ENCODE measurements at regions of chr9 and their contacts with region 1.

Region 1: DNA sequence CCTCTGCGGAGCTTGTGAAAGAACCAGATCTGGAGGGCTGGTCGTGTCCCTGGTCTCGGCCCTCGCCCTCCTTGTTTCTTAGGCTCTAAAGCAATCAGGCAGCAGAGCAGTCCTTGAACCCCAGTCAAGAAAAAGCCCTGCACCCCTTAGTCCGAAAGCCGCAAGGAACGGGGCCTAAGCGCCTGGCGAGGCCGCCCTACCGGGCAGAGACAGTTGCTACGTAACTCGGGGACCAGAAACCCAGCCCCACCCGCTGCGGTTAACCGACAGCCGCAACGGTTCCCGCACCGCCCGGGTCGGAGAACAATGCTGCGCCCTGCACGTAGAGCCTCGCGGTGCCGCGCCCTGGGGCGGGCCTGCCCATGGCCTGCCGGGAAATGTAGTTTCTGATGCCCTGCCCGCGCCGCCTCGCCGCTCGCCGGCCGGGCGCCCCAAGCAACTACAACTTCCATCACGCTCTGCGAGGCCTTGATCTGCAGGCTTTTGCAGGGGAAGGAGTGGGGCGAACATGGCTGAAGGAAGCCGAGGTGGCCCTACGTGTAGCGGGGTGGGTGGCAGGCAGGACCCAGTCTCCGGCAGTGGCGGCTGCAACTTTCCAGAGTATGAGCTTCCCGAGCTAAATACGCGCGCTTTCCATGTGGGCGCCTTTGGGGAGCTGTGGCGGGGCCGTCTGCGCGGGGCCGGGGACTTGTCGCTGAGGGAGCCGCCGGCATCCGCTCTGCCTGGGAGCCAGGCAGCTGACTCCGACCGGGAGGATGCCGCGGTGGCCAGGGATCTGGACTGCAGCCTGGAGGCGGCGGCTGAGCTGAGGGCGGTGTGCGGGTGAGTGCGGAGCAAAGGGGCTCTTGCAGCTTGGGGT is at the start of gene SNAPC3:
- DNase-seq: peak; percentile 94 to 97 (median 96)
- ATAC-seq: peak; percentile 99 to 100 (median 100)
- H3K4me3 ChIP-seq: peak within 1 kb of the TSS; percentile 78 to 99 (median 88)
- H3K27ac ChIP-seq: peak within 1 kb of the TSS; percentile 81 to 98 (median 92)
- H3K4me1 ChIP-seq: peaks cover 0 to 48% (median 34%) of the 10 kb centered on the region in 12 donors
- H3K27me3 ChIP-seq: no peaks in the 10 kb centered on the region
- CTCF ChIP-seq: peak in 3 of 12 donors; percentile 9 to 21 (median 14)
- POLR2A ChIP-seq: peak in 1 of 2 donors; percentile 84
- total RNA-seq, gene SNAPC3: 22.3 to 41.1 (median 30.6) TPM

Region 2: GRCh38 chr9:15211160-15211814 is 211.3 kb before region 1 on chr9:
- intact Hi-C with region 1: loop called in 8 of 10 experiments (anchors 5 to 10 kb)
- DNase-seq: peak in 3 of 5 donors; percentile 34 to 60 (median 53)
- ATAC-seq: peak; percentile 61 to 72 (median 67)
- H3K4me3 ChIP-seq: peak overlapping the region in 1 of 12 donors; percentile 6
- H3K27ac ChIP-seq: peak overlapping the region in 3 of 12 donors; percentile 14 to 66 (median 32)
- H3K4me1 ChIP-seq: peaks cover 0 to 12% (median 7%) of the 10 kb centered on the region in 12 donors
- H3K27me3 ChIP-seq: no peaks in the 10 kb centered on the region
- CTCF ChIP-seq: peak; percentile 82 to 97 (median 92)
- POLR2A ChIP-seq: no peak

Region 3: DNA sequence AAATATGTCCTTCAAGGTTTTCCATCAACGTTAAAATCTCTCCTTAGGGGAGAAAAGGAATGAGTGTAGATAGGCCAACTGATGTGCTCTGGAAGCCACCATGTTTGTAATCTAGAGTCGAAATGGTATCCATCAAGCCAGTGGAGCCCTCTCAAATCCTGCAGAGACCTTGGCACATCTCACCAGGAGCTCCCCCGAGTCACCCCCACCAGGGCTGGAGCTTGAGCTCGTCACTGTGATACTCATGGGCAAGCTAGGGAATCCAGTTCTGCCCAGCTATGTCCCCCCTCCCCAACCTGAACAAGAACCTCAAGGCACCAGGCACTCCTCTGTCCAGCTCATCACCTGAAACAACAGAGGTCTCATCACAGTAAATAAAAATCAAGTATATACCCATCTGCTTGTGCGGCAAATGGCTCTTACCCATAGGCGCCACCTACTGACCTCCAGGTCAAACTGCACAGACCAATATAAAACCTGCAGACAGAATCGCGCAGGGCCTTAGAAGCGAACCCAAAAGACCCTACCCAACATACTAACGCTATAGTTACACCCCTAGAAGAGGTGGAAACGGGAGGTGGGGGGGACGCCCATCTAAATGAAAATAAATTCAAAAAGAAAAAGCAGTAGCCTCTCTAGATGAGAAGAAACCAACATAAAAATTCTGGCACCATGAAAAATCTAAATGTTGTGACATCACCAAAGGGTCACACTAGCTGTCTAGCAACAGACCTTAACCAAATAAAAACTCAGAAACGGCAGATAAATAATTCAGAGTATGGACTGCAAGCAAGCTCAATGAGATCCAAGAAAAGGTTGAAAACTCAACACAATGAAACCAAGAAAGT is 190.6 kb before region 1 on chr9:
- intact Hi-C with region 1: no loop called
- DNase-seq: no peak
- ATAC-seq: peak in 1 of 4 donors; percentile 44
- H3K4me3 ChIP-seq: no peak overlapping the region
- H3K27ac ChIP-seq: no peak overlapping the region
- H3K4me1 ChIP-seq: no peaks in the 10 kb centered on the region
- H3K27me3 ChIP-seq: no peaks in the 10 kb centered on the region
- CTCF ChIP-seq: peak in 10 of 12 donors; percentile 11 to 58 (median 36)
- POLR2A ChIP-seq: no peak

Region 4: GRCh38 chr9:15295761-15296405 is 126.7 kb before region 1 on chr9:
- intact Hi-C with region 1: loop called in 3 of 10 experiments (anchors 5 to 10 kb)
- DNase-seq: no peak
- ATAC-seq: peak; percentile 32 to 73 (median 53)
- H3K4me3 ChIP-seq: peak overlapping the region in 11 of 12 donors; percentile 18 to 62 (median 52)
- H3K27ac ChIP-seq: peak overlapping the region; percentile 61 to 92 (median 84)
- H3K4me1 ChIP-seq: peaks cover 0 to 72% (median 15%) of the 10 kb centered on the region in 12 donors
- H3K27me3 ChIP-seq: no peaks in the 10 kb centered on the region
- CTCF ChIP-seq: no peak
- POLR2A ChIP-seq: no peak

Region 5: GRCh38 chr9:15306757-15307534 is 115.7 kb before region 1 on chr9 and contains the start of gene TTC39B:
- intact Hi-C with region 1: loop called in 4 of 10 experiments (anchors 1 to 10 kb)
- DNase-seq: peak; percentile 94 to 96 (median 95)
- ATAC-seq: peak; percentile 94 to 99 (median 99)
- H3K4me3 ChIP-seq: peak within 1 kb of the TSS; percentile 63 to 99 (median 86)
- H3K27ac ChIP-seq: peak within 1 kb of the TSS; percentile 6 to 88 (median 76)
- H3K4me1 ChIP-seq: peaks cover 0 to 19% (median 11%) of the 10 kb centered on the region in 12 donors
- H3K27me3 ChIP-seq: peaks cover 0 to 4% (median 0%) of the 10 kb centered on the region in 9 donors
- CTCF ChIP-seq: peak in 4 of 12 donors; percentile 16 to 45 (median 28)
- POLR2A ChIP-seq: peak in 1 of 2 donors; percentile 78
- total RNA-seq, gene TTC39B: 1.0 to 5.9 (median 1.5) TPM

Region 6: GRCh38 chr9:15317836-15318235 is 104.8 kb before region 1 on chr9:
- intact Hi-C with region 1: loop called in 1 of 10 experiments (anchors 10 kb)
- DNase-seq: no peak
- ATAC-seq: no peak
- H3K4me3 ChIP-seq: no peak overlapping the region
- H3K27ac ChIP-seq: no peak overlapping the region
- H3K4me1 ChIP-seq: no peaks in the 10 kb centered on the region
- H3K27me3 ChIP-seq: no peaks in the 10 kb centered on the region
- CTCF ChIP-seq: no peak
- POLR2A ChIP-seq: no peak

Region 7: GRCh38 chr9:15482146-15482545 is 59.5 kb after region 1 on chr9:
- intact Hi-C with region 1: no loop called
- DNase-seq: no peak
- ATAC-seq: no peak
- H3K4me3 ChIP-seq: no peak overlapping the region
- H3K27ac ChIP-seq: no peak overlapping the region
- H3K4me1 ChIP-seq: peaks cover 0 to 5% (median 0%) of the 10 kb centered on the region in 12 donors
- H3K27me3 ChIP-seq: no peaks in the 10 kb centered on the region
- CTCF ChIP-seq: no peak
- POLR2A ChIP-seq: no peak

Region 8: DNA sequence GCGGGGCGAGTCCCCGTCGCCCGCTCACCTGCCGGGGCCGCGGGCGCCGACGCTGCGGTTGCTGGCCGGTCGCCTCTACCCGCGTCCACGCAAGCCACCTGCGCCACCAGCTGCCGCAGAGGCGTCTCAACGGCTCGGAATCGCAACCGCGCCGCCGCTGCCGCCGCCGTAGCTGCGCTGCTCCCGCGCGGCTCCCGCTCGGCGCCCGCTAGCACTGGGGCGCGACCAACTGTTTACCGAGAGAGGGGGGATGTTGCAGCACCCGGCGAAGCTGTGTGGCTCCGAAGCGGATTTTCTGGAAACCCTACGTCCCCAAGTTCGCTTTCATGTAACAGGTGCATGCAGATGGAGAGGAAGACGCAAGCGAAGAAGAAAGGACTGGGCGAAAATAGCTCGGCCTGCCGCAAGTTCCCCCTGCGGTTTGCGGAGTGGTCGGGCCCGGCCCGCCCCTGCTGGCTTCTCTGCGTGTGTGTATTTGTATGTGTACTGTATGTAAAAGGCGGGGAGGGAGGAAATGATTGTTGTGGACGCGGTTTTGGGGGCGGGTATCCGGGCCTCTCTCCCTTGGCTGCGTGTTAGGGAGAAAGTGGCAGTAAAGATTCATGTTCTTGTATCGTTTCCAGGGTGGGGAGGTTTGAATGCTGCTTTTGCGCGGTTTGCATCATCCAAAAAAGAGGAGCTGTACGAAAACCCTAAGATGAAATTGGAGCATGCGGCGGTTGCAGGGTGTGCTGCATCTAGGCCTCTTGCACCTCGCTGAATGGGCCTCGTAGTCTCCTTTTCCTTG is 88.4 kb after region 1 on chr9 and contains the start of gene PSIP1:
- intact Hi-C with region 1: loop called in 1 of 10 experiments (anchors 10 kb)
- DNase-seq: peak; percentile 75 to 88 (median 77)
- ATAC-seq: peak; percentile 87 to 96 (median 94)
- H3K4me3 ChIP-seq: peak within 1 kb of the TSS; percentile 80 to 99 (median 92)
- H3K27ac ChIP-seq: peak within 1 kb of the TSS; percentile 81 to 98 (median 92)
- H3K4me1 ChIP-seq: peaks cover 0 to 33% (median 18%) of the 10 kb centered on the region in 12 donors
- H3K27me3 ChIP-seq: no peaks in the 10 kb centered on the region
- CTCF ChIP-seq: peak in 7 of 12 donors; percentile 3 to 20 (median 9)
- POLR2A ChIP-seq: peak in 1 of 2 donors; percentile 65
- total RNA-seq, gene PSIP1: 16.5 to 29.1 (median 21.9) TPM

Region 9: DNA sequence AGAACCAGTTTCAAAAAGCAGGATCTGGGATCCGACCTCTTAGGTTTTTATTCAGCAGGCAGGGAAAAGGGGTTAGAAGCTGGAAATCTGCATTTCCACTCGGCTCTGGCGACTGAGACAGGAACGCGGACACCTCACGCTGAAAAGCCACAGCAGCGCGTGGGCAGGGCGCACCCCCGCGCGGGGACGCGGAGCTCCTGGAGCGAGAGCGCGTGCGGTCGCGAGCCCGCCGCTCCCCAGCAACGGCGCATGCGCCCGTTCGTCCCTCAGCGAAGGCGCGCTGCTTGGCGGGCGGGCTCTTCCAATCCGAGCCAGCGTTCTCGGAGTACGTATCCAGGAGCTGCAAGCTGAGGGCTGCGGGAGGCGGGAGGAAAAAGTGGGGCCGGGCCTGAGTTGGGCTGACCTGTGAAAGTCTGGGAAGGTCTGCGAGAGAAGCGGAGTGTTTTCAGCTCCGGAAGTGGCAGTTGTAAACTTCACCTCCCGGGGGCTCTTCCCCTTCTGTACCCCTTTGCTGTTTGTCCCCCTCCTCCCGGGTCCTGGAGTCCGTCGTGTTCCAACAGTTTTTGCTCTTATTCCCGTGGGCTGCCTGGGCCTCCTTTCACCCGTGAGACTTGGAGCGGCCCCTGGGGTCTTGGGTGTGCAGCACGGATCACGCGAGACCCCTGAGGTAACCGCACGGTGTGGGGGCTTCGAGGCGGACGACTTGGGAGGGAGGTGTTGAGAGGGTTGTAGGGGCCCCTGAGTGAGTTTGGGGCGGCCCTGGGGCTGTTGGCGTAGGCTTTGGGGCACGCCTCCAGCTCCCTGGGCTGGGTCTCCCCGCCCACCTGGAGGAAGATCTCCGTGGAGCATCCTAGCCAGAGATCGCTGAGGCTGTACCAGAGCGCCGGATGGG is 130.3 kb after region 1 on chr9 and contains the start of gene CCDC171:
- intact Hi-C with region 1: loop called in 2 of 10 experiments (anchors 2 to 5 kb)
- DNase-seq: peak; percentile 93 to 95 (median 95)
- ATAC-seq: peak; percentile 96 to 99 (median 98)
- H3K4me3 ChIP-seq: peak within 1 kb of the TSS; percentile 54 to 94 (median 80)
- H3K27ac ChIP-seq: peak within 1 kb of the TSS; percentile 59 to 91 (median 82)
- H3K4me1 ChIP-seq: peaks cover 0 to 10% (median 4%) of the 10 kb centered on the region in 12 donors
- H3K27me3 ChIP-seq: no peaks in the 10 kb centered on the region
- CTCF ChIP-seq: peak in 1 of 12 donors; percentile 7
- POLR2A ChIP-seq: peak in 1 of 2 donors; percentile 62
- total RNA-seq, gene CCDC171: 0.44 to 3.4 (median 1.4) TPM

Measured in heart left ventricle (tissue), 16 donors.